Dorsolateral prefrontal cortex (tissue), 120 donors: ENCODE measurements at regions of chr5 and their contacts with region 1.

Region 1: DNA sequence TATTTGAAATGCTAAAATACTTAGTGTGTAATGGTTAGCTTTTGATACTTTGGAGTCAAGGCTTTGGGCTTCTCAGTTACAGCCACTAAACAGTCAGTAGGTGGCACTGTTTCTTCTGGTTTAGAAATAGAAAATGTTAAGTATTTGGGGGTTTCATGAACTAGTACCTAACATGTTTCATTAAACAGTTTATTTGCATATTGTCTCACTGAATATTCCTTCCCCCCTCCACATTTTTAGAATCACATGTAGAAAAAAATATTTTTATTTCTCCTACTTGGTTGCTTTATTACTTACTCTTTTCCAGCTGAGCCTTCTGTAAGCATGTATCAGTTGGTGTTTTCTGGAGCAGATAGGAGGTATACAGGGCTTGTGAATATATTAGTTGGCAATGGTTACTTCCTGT is 48.0 kb downstream of the IPO11 start:
- DNase-seq: no peak
- H3K4me3 ChIP-seq: no peak overlapping the region
- H3K27ac ChIP-seq: no peak overlapping the region
- H3K27me3 ChIP-seq: no peaks in the 10 kb centered on the region
- CTCF ChIP-seq: peak; percentile 46 to 91 (median 79)

Region 2: GRCh38 chr5:62354028-62354874 is 106.3 kb before region 1 on chr5:
- intact Hi-C with region 1: no loop called
- DNase-seq: no peak
- H3K4me3 ChIP-seq: no peak overlapping the region
- H3K27ac ChIP-seq: peak overlapping the region in 23 of 59 donors; percentile 3 to 68 (median 37)
- H3K27me3 ChIP-seq: no peaks in the 10 kb centered on the region
- CTCF ChIP-seq: peak; percentile 46 to 88 (median 72)

Region 3: DNA sequence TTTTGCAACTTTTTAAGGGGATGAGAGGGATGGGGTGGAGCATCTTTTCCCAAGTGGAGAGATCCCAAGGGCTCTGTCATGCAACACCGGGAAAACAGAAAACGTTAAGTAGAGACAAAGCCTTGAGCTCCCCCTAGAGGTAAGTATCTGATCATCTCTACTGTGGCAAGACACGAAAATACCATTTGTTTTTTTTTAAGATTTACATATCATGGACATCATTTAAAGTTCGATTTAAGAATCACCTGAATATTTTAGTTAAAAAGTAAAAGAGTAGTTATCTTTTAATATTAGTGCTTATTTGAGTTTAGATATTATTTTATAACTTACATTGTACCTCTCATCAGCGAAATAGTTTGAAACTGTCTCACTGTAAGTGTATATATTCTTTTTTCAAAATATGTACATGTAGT is 318.4 kb after region 1 on chr5:
- intact Hi-C with region 1: loop called (anchors 1 to 5 kb)
- DNase-seq: no peak
- H3K4me3 ChIP-seq: no peak overlapping the region
- H3K27ac ChIP-seq: peak overlapping the region in 1 of 59 donors; percentile 30
- H3K27me3 ChIP-seq: no peaks in the 10 kb centered on the region
- CTCF ChIP-seq: peak; percentile 56 to 92 (median 77)